Stomach (tissue), 19 donors: ENCODE measurements at regions of chr19 and their contacts with region 1.

Region 1: DNA sequence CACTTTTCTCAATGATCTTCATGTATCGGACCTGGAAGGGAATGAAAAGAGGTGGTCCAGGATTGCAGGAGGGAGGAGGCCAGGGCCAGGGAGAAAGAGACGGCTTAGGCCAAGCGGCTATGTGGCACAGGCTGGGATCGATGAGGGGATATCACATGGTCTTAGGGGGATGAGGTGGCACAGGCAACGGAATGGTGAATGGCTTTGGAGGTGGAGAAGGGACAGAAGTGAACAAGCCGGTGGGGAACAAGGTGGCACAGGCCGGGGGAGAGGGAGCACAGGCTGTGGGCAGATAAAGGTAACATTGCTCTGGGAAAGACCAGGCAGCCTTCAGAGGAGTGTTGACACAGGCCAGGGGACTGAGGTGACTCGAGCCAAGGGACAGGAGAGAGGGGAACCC is 5.7 kb upstream of the CDKN2D start:
- DNase-seq: no peak
- H3K4me3 ChIP-seq: no peak overlapping the region
- H3K27ac ChIP-seq: no peak overlapping the region
- H3K4me1 ChIP-seq: peaks cover 2 to 18% (median 10%) of the 10 kb centered on the region in 4 donors
- H3K27me3 ChIP-seq: no peaks in the 10 kb centered on the region
- CTCF ChIP-seq: no peak
- EP300 ChIP-seq: no peak
- POLR2A ChIP-seq: no peak

Region 2: DNA sequence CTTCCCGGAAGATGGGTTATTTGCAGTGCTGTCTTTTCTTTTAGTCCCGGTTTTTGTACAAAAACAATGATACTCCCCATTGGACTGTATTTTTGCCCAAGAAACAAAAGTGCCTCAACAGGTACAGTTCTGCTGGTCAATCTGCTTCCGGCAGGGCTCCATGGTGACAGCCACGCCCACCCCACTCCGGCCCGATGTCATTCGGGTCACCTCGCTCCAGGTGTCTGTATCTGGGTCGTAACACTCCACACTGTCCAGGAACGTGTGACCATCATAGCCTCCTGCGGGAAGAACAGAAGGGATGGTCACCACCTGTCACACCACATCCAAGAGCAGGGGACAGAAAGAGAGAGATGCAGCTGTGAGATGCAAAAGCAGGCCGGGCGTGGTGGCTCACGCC is 87.9 kb before region 1 on chr19:
- intact Hi-C with region 1: loop called (anchors 10 kb)
- DNase-seq: no peak
- H3K4me3 ChIP-seq: no peak overlapping the region
- H3K27ac ChIP-seq: no peak overlapping the region
- H3K4me1 ChIP-seq: peaks cover 0 to 15% (median 7%) of the 10 kb centered on the region in 4 donors
- H3K27me3 ChIP-seq: no peaks in the 10 kb centered on the region
- CTCF ChIP-seq: no peak
- EP300 ChIP-seq: no peak
- POLR2A ChIP-seq: no peak

Region 3: GRCh38 chr19:10533646-10534386 is 40.6 kb before region 1 on chr19:
- intact Hi-C with region 1: no loop called
- DNase-seq: peak in 1 of 2 donors; percentile 45
- H3K4me3 ChIP-seq: no peak overlapping the region
- H3K27ac ChIP-seq: no peak overlapping the region
- H3K4me1 ChIP-seq: no peaks in the 10 kb centered on the region
- H3K27me3 ChIP-seq: peaks cover 0 to 30% (median 4%) of the 10 kb centered on the region in 3 donors
- CTCF ChIP-seq: no peak
- EP300 ChIP-seq: no peak
- POLR2A ChIP-seq: no peak

Region 4: DNA sequence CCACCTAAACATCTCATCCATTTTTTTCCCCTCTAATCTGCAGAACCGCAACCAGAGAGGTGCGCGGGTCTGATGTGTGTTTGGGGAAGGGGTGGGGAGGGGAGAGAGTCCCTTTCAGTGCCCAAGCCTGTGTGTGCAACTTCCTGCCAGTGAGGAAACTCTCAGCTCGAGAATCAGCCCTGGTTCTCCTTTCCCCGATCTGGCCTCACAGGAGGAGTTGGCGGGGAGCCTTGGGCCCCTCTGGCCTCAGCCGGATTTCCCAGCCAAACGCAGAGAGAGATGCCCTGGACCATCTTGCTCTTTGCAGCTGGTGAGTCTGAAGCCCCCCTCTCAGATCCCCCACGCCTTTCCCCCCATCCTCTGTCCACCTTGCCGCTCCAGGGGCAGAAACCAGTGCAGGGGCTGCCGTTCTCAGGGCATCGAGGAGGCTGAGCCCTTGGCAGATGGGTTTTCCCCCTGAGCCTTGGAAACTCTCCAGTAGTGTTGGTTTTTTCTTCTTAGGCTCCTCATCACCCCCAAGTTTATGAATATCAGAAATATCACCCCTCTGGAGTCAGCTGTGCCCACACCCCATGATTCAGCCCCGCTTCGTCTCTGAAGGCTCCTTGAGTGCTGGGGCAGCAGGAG is 273.9 kb after region 1 on chr19 and contains the start of gene C19orf38:
- intact Hi-C with region 1: no loop called
- DNase-seq: peak in 1 of 2 donors; percentile 68
- H3K4me3 ChIP-seq: peak within 1 kb of the TSS in 2 of 4 donors; percentile 19 to 23
- H3K27ac ChIP-seq: peak within 1 kb of the TSS in 2 of 5 donors; percentile 46
- H3K4me1 ChIP-seq: no peaks in the 10 kb centered on the region
- H3K27me3 ChIP-seq: peaks cover 0 to 26% (median 0%) of the 10 kb centered on the region in 3 donors
- CTCF ChIP-seq: no peak
- EP300 ChIP-seq: no peak
- POLR2A ChIP-seq: no peak
- total RNA-seq, gene C19orf38: 1.8 to 2.2 TPM in 2 of 5 donors, not detected in the others